T-cell (primary cell): ENCODE measurements at regions of chr12 and their contacts with region 1.

Region 1: GRCh38 chr12:12661086-12661485 is 34.9 kb downstream of the GPR19 start:
- DNase-seq: no peak
- ATAC-seq: no peak
- H3K4me3 ChIP-seq: no peak overlapping the region
- H3K4me3 Mint-ChIP-seq: no peak overlapping the region
- H3K27ac ChIP-seq: no peak overlapping the region
- H3K27ac Mint-ChIP-seq: no peak overlapping the region
- H3K4me1 ChIP-seq: peaks cover 0 to 2% of the 10 kb centered on the region in 2 experiments
- H3K4me1 Mint-ChIP-seq: peaks cover under 1% of the 10 kb centered on the region in 3 donors
- H3K27me3 ChIP-seq: no peaks in the 10 kb centered on the region
- H3K27me3 Mint-ChIP-seq: no peaks in the 10 kb centered on the region

Region 2: GRCh38 chr12:12546314-12546772 is 114.7 kb before region 1 on chr12:
- CTCF ChIA-PET with region 1: no interaction called
- POLR2A ChIA-PET with region 1: interaction called in 1 of 2 experiments, 14 read pairs
- DNase-seq: no peak
- ATAC-seq: no peak
- H3K4me3 ChIP-seq: no peak overlapping the region
- H3K4me3 Mint-ChIP-seq: no peak overlapping the region
- H3K27ac ChIP-seq: no peak overlapping the region
- H3K27ac Mint-ChIP-seq: no peak overlapping the region
- H3K4me1 ChIP-seq: peaks cover under 1 to 3% of the 10 kb centered on the region in 2 experiments
- H3K4me1 Mint-ChIP-seq: peaks cover 19 to 59% (median 54%) of the 10 kb centered on the region in 3 donors
- H3K27me3 ChIP-seq: no peaks in the 10 kb centered on the region
- H3K27me3 Mint-ChIP-seq: no peaks in the 10 kb centered on the region

Region 3: GRCh38 chr12:12572659-12573058 is 88.4 kb before region 1 on chr12:
- CTCF ChIA-PET with region 1: interaction called in 1 of 2 experiments, 4 read pairs
- POLR2A ChIA-PET with region 1: interaction called in 1 of 2 experiments, 10 read pairs
- DNase-seq: no peak
- ATAC-seq: no peak
- H3K4me3 ChIP-seq: no peak overlapping the region
- H3K4me3 Mint-ChIP-seq: no peak overlapping the region
- H3K27ac ChIP-seq: no peak overlapping the region
- H3K27ac Mint-ChIP-seq: no peak overlapping the region
- H3K4me1 ChIP-seq: no peaks in the 10 kb centered on the region
- H3K4me1 Mint-ChIP-seq: peaks cover 0 to 5% (median 0%) of the 10 kb centered on the region in 3 donors
- H3K27me3 ChIP-seq: no peaks in the 10 kb centered on the region
- H3K27me3 Mint-ChIP-seq: no peaks in the 10 kb centered on the region

Region 4: DNA sequence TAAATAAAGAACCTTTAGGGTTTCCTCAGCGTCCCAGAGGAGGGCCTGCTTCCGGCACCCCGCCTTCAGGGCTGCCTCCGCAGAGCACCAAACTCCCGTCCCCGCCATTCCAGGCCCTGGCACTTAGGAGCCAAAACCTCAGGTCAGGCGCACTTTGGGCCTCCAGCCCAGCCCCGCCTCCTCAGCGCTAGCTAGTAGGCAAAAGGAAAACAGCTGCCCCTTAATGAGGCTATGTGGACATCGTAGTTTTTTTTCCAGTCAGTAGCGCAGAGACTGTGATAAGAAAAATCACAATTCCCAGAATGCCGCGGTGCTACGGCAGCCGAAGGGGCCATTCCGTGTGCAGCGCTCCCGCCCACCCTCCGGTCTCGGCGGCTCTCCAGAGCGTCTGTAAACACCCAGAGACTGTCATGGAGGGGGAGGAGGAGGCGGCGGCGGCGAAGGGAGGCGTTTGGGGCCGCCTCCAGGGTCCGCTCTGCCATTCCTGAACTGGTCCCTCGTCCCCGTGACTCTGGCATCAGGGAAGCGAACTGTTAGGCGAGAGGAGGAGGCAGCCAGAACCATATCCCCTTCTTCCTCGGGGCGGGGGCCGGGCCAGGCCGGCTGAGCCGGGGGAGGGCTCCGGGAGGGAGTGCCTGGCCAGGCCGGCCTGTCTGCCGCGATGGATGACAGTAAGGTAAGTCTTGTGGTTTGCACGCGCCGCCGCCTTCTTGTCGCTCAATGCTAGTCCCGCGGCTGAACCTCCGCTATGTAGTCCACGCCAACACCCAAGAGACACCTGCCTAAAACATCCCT is 49.4 kb before region 1 on chr12 and contains the start of gene CREBL2:
- CTCF ChIA-PET with region 1: no interaction called
- POLR2A ChIA-PET with region 1: no interaction called
- DNase-seq: peak; percentile 68 to 94 (median 85)
- ATAC-seq: peak; percentile 87 to 92 (median 88)
- H3K4me3 ChIP-seq: peak within 1 kb of the TSS; percentile 72 to 94
- H3K4me3 Mint-ChIP-seq: peak within 1 kb of the TSS; percentile 79 to 96 (median 87)
- H3K27ac ChIP-seq: peak within 1 kb of the TSS; percentile 89
- H3K27ac Mint-ChIP-seq: peak within 1 kb of the TSS; percentile 98 to 99
- H3K4me1 ChIP-seq: peaks cover 26 to 33% of the 10 kb centered on the region in 2 experiments
- H3K4me1 Mint-ChIP-seq: peaks cover 60 to 70% (median 68%) of the 10 kb centered on the region in 3 donors
- H3K27me3 ChIP-seq: no peaks in the 10 kb centered on the region
- H3K27me3 Mint-ChIP-seq: no peaks in the 10 kb centered on the region
- total RNA-seq, gene CREBL2: 24.4 to 37.2 (median 33.8) TPM

Region 5: GRCh38 chr12:12648951-12649650 is 12.0 kb before region 1 on chr12:
- CTCF ChIA-PET with region 1: no interaction called
- POLR2A ChIA-PET with region 1: no interaction called
- DNase-seq: no peak
- ATAC-seq: no peak
- H3K4me3 ChIP-seq: no peak overlapping the region
- H3K4me3 Mint-ChIP-seq: no peak overlapping the region
- H3K27ac ChIP-seq: no peak overlapping the region
- H3K27ac Mint-ChIP-seq: no peak overlapping the region
- H3K4me1 ChIP-seq: peaks cover 0 to 5% of the 10 kb centered on the region in 2 experiments
- H3K4me1 Mint-ChIP-seq: peaks cover 11 to 15% (median 14%) of the 10 kb centered on the region in 3 donors
- H3K27me3 ChIP-seq: no peaks in the 10 kb centered on the region
- H3K27me3 Mint-ChIP-seq: no peaks in the 10 kb centered on the region

Region 6: GRCh38 chr12:12786716-12787601 is 125.9 kb after region 1 on chr12:
- CTCF ChIA-PET with region 1: no interaction called
- POLR2A ChIA-PET with region 1: no interaction called
- DNase-seq: peak; percentile 31 to 86 (median 62)
- ATAC-seq: peak; percentile 91 to 95 (median 92)
- H3K4me3 ChIP-seq: peak overlapping the region; percentile 65 to 76
- H3K4me3 Mint-ChIP-seq: peak overlapping the region; percentile 80 to 84 (median 83)
- H3K27ac ChIP-seq: peak overlapping the region; percentile 79
- H3K27ac Mint-ChIP-seq: peak overlapping the region; percentile 86 to 88
- H3K4me1 ChIP-seq: peaks cover 9 to 20% of the 10 kb centered on the region in 2 experiments
- H3K4me1 Mint-ChIP-seq: peaks cover 17 to 27% (median 26%) of the 10 kb centered on the region in 3 donors
- H3K27me3 ChIP-seq: no peaks in the 10 kb centered on the region
- H3K27me3 Mint-ChIP-seq: no peaks in the 10 kb centered on the region

Region 7: GRCh38 chr12:12845025-12845787 is 184.1 kb after region 1 on chr12:
- CTCF ChIA-PET with region 1: interaction called in 1 of 2 experiments, 3 read pairs
- POLR2A ChIA-PET with region 1: interaction called in 1 of 2 experiments, 12 read pairs
- DNase-seq: no peak
- ATAC-seq: no peak
- H3K4me3 ChIP-seq: no peak overlapping the region
- H3K4me3 Mint-ChIP-seq: no peak overlapping the region
- H3K27ac ChIP-seq: no peak overlapping the region
- H3K27ac Mint-ChIP-seq: peak overlapping the region; percentile 73 to 75
- H3K4me1 ChIP-seq: peaks cover 12 to 19% of the 10 kb centered on the region in 2 experiments
- H3K4me1 Mint-ChIP-seq: peaks cover 25 to 32% (median 26%) of the 10 kb centered on the region in 3 donors
- H3K27me3 ChIP-seq: no peaks in the 10 kb centered on the region
- H3K27me3 Mint-ChIP-seq: no peaks in the 10 kb centered on the region